MCF 10A (cell line): ENCODE measurements at regions of chr17 and their contacts with region 1.

Region 1: GRCh38 chr17:28763804-28764266 is 20.0 kb downstream of the TRAF4 start:
- DNase-seq: peak; percentile 83
- H3K4me3 Mint-ChIP-seq: no peak overlapping the region
- H3K27ac Mint-ChIP-seq: peak overlapping the region; percentile 16
- H3K4me1 Mint-ChIP-seq: peaks cover 10% of the 10 kb centered on the region
- H3K27me3 Mint-ChIP-seq: no peaks in the 10 kb centered on the region
- CTCF ChIP-seq: peak; percentile 70

Region 2: GRCh38 chr17:28812091-28812747 is 48.4 kb after region 1 on chr17:
- CTCF ChIA-PET with region 1: interaction called, 20 read pairs
- POLR2A ChIA-PET with region 1: interaction called, 52 read pairs
- intact Hi-C with region 1: loop called (anchors 1 kb)
- DNase-seq: peak; percentile 97
- H3K4me3 Mint-ChIP-seq: peak overlapping the region; percentile 90
- H3K27ac Mint-ChIP-seq: peak overlapping the region; percentile 98
- H3K4me1 Mint-ChIP-seq: peaks cover 28% of the 10 kb centered on the region
- H3K27me3 Mint-ChIP-seq: no peaks in the 10 kb centered on the region
- CTCF ChIP-seq: no peak

Region 3: GRCh38 chr17:28854457-28855350 is 90.9 kb after region 1 on chr17 and contains the start of gene ERAL1:
- CTCF ChIA-PET with region 1: interaction called, 5 read pairs
- POLR2A ChIA-PET with region 1: interaction called, 4 read pairs
- intact Hi-C with region 1: loop called (anchors 1 kb)
- DNase-seq: peak; percentile 93
- H3K4me3 Mint-ChIP-seq: peak within 1 kb of the TSS; percentile 90
- H3K27ac Mint-ChIP-seq: peak within 1 kb of the TSS; percentile 87
- H3K4me1 Mint-ChIP-seq: no peaks in the 10 kb centered on the region
- H3K27me3 Mint-ChIP-seq: no peaks in the 10 kb centered on the region
- CTCF ChIP-seq: no peak
- total RNA-seq, gene ERAL1: 51.6 and 53.7 TPM in 2 replicates

Region 4: DNA sequence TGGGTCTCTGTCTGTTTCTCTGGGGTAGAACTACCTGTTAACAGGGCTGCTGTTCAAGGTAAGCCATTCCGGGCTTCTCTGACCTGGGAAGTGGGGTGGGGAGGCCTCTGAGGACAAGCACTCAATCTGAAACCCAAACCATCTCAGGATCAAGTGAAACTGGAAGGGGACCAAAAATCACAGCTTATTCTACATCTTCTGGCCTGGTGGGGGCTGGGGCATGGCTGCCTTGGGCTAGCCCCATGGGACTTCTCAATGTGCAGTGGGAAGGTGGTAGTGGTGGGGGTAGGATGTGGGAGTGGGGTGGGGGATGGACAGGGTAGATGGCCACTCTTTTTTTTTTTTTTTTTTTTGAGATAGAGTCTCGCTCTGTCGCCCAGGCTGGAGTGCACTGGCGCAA is 128.2 kb after region 1 on chr17:
- CTCF ChIA-PET with region 1: interaction called, 23 read pairs
- POLR2A ChIA-PET with region 1: interaction called, 20 read pairs
- intact Hi-C with region 1: loop called (anchors 1 kb)
- DNase-seq: no peak
- H3K4me3 Mint-ChIP-seq: no peak overlapping the region
- H3K27ac Mint-ChIP-seq: no peak overlapping the region
- H3K4me1 Mint-ChIP-seq: peaks cover 23% of the 10 kb centered on the region
- H3K27me3 Mint-ChIP-seq: no peaks in the 10 kb centered on the region
- CTCF ChIP-seq: no peak

Region 5: GRCh38 chr17:28902819-28903545 is 139.1 kb after region 1 on chr17 and contains the start of gene DHRS13:
- CTCF ChIA-PET with region 1: interaction called, 43 read pairs
- POLR2A ChIA-PET with region 1: interaction called, 20 read pairs
- intact Hi-C with region 1: no loop called
- DNase-seq: peak; percentile 93
- H3K4me3 Mint-ChIP-seq: peak within 1 kb of the TSS; percentile 72
- H3K27ac Mint-ChIP-seq: peak within 1 kb of the TSS; percentile 63
- H3K4me1 Mint-ChIP-seq: peaks cover 30% of the 10 kb centered on the region
- H3K27me3 Mint-ChIP-seq: no peaks in the 10 kb centered on the region
- CTCF ChIP-seq: peak; percentile 98
- total RNA-seq, gene DHRS13: 9.1 and 9.5 TPM in 2 replicates

Region 6: GRCh38 chr17:28916302-28916934 is 152.6 kb after region 1 on chr17:
- CTCF ChIA-PET with region 1: interaction called, 22 read pairs
- POLR2A ChIA-PET with region 1: interaction called, 3 read pairs
- intact Hi-C with region 1: loop called (anchors 5 kb)
- DNase-seq: no peak
- H3K4me3 Mint-ChIP-seq: no peak overlapping the region
- H3K27ac Mint-ChIP-seq: no peak overlapping the region
- H3K4me1 Mint-ChIP-seq: peaks cover 9% of the 10 kb centered on the region
- H3K27me3 Mint-ChIP-seq: no peaks in the 10 kb centered on the region
- CTCF ChIP-seq: peak; percentile 53